GM12878 (cell line): ENCODE measurements at regions of chr6 and their contacts with region 1.

Region 1: DNA sequence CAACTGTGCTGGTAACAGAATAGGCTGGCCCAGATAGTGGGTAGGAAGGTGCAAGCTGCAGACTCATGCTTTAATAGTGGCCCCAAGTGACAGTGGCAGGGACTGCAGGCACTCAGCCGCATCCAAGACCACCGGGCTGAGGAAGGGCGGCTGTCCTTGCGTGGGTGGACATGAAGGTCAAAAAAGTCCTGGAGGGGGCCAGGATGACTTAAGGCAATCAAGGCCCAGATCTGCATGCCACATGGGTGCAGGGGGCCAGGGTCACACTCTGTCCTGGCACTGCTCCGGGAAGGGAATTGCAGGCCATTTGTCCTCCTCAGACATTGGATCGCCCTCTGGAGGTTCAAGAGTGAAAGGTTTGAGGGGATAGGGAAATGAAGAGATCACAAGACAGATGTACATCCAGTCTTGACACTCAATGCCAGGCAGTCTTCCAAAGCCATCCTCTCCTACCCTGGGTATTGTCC is 10.4 kb upstream of the VNN2 start:
- DNase-seq: no peak
- ATAC-seq: peak; percentile 94
- H3K4me3 ChIP-seq: no peak overlapping the region
- H3K27ac ChIP-seq: no peak overlapping the region
- H3K4me1 ChIP-seq: no peaks in the 10 kb centered on the region
- H3K27me3 ChIP-seq: no peaks in the 10 kb centered on the region
- CTCF ChIP-seq: peak; percentile 62 to 70 (median 66)
- EP300 ChIP-seq: no peak
- POLR2A ChIP-seq: no peak
- RAD21 ChIP-seq: peak; percentile 72

Region 2: DNA sequence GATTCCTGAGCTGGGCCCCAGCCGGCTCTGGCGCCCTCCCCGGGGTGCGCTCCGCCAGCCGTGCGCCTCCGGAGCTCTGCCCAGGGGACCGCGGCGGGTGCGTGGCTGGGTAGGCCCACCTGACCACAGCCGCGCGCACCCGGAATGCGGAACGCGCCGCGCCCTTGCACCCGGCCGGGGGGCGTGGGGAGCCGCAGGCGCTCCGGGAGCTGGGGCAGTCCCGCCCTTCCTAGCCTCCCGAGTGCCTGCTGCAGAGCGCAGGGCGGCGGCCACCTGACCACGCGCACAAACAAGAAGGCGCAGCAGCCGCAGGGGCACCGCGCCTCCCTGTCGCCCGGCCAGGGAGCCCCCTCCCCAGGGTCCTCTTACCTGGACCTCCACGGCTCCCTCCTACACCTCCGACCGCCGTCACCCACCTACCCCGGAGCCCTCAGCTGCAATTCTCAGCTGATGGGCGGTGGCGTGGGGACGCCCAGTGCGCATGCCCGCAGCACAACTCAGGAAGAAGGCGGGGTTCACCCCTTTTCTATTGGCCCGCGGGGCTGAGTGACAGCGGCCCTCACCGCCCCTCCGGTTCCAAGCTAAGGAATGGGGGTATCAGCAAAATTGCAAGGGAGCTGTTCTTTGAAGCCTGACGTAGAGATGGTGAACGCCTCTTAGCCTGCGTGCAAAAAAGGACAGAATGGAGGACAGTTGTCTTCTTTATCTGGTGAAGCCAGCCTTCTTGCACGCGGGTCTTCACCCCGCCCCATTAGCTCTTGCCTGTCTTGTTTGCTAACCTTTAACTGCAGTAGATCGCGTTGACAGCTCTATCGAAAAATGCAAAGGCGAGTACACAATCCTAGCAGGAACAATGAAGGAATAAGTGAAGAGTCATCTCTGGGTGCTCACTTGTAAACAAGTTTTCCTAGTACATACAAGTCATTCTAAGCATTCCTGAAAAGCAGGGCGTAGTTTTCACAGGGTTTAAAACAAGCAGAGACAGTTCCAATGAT is 255.1 kb before region 1 on chr6 and contains the start of gene STX7:
- CTCF ChIA-PET with region 1: no interaction called
- POLR2A ChIA-PET with region 1: no interaction called
- RAD21 ChIA-PET with region 1: interaction called, 4 read pairs
- SMC1A ChIA-PET with region 1: no interaction called
- in situ Hi-C with region 1: no loop called
- intact Hi-C with region 1: loop called (anchors 5 kb)
- DNase-seq: peak; percentile 48
- ATAC-seq: peak; percentile 91
- H3K4me3 ChIP-seq: peak within 1 kb of the TSS; percentile 61
- H3K27ac ChIP-seq: peak within 1 kb of the TSS; percentile 63
- H3K4me1 ChIP-seq: peaks cover 6% of the 10 kb centered on the region
- H3K27me3 ChIP-seq: no peaks in the 10 kb centered on the region
- CTCF ChIP-seq: no peak
- EP300 ChIP-seq: no peak
- POLR2A ChIP-seq: peak; percentile 77
- RAD21 ChIP-seq: no peak
- polyA plus RNA-seq, gene STX7: 26.5 to 30.7 TPM

Region 3: GRCh38 chr6:132530293-132530974 is 237.7 kb before region 1 on chr6:
- CTCF ChIA-PET with region 1: interaction called, 8 read pairs
- POLR2A ChIA-PET with region 1: no interaction called
- RAD21 ChIA-PET with region 1: interaction called, 3 read pairs
- SMC1A ChIA-PET with region 1: interaction called, 3 read pairs
- in situ Hi-C with region 1: no loop called
- intact Hi-C with region 1: loop called (anchors 1 kb)
- DNase-seq: peak; percentile 21
- ATAC-seq: peak; percentile 96
- H3K4me3 ChIP-seq: no peak overlapping the region
- H3K27ac ChIP-seq: no peak overlapping the region
- H3K4me1 ChIP-seq: no peaks in the 10 kb centered on the region
- H3K27me3 ChIP-seq: no peaks in the 10 kb centered on the region; a peak in 1 of 4 replicates
- CTCF ChIP-seq: peak; percentile 57 to 74 (median 60); a peak in 5 of 6 replicates
- EP300 ChIP-seq: no peak
- POLR2A ChIP-seq: no peak
- RAD21 ChIP-seq: peak; percentile 91

Region 4: GRCh38 chr6:132750455-132751248 is 17.4 kb before region 1 on chr6:
- CTCF ChIA-PET with region 1: interaction called, 7 read pairs
- POLR2A ChIA-PET with region 1: interaction called, 10 read pairs
- RAD21 ChIA-PET with region 1: interaction called, 25 read pairs
- SMC1A ChIA-PET with region 1: interaction called, 80 read pairs
- in situ Hi-C with region 1: no loop called
- intact Hi-C with region 1: no loop called
- DNase-seq: peak; percentile 69
- ATAC-seq: peak; percentile 91
- H3K4me3 ChIP-seq: peak overlapping the region; percentile 18; the same call in 1 of the 2 replicates
- H3K27ac ChIP-seq: peak overlapping the region; percentile 72
- H3K4me1 ChIP-seq: peaks cover 20% of the 10 kb centered on the region
- H3K27me3 ChIP-seq: no peaks in the 10 kb centered on the region
- CTCF ChIP-seq: no peak
- EP300 ChIP-seq: peak; percentile 44 to 47; a peak in 2 of 4 replicates
- POLR2A ChIP-seq: no peak
- RAD21 ChIP-seq: no peak

Region 5: GRCh38 chr6:132780770-132781371 is 12.8 kb after region 1 on chr6:
- CTCF ChIA-PET with region 1: interaction called, 12 read pairs
- POLR2A ChIA-PET with region 1: no interaction called
- RAD21 ChIA-PET with region 1: interaction called, 3 read pairs
- SMC1A ChIA-PET with region 1: interaction called, 5 read pairs
- in situ Hi-C with region 1: no loop called
- intact Hi-C with region 1: no loop called
- DNase-seq: no peak
- ATAC-seq: peak; percentile 84
- H3K4me3 ChIP-seq: no peak overlapping the region
- H3K27ac ChIP-seq: no peak overlapping the region
- H3K4me1 ChIP-seq: no peaks in the 10 kb centered on the region
- H3K27me3 ChIP-seq: no peaks in the 10 kb centered on the region
- CTCF ChIP-seq: peak; percentile 42 to 50 (median 43); a peak in 4 of 6 replicates
- EP300 ChIP-seq: no peak
- POLR2A ChIP-seq: no peak
- RAD21 ChIP-seq: peak; percentile 37; the same call in 1 of the 2 replicates

Region 6: DNA sequence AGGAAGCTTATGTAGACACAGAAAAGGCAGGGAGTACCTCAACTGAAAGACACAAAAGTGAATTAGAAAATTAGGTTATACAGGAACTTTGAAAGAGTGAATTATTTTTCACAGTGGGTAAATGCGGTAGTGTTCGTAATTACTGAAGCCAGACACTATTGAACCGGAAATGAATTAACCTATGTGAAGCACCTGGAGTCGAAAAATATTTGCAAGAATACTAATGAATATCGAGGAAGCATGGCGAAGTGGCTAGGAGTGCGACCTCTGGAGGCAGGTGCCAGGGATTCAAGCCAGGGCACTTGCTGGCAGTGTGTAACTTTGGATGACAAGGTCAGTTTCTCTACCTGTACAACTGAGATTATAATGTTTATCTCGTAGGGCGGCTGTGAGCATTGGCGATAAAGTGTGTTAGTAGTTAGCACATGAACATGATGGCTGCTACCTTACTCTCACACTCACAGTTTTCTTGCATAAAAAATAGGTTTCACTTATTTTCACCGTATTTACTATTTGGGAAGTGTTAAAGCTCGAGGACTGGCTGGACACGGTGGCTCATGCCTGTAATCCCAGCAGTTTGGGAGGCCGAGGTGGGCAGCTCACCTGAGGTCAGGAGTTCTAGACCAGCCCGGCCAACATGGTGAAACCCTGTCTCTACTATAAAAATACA is 30.9 kb after region 1 on chr6:
- CTCF ChIA-PET with region 1: interaction called, 18 read pairs
- POLR2A ChIA-PET with region 1: no interaction called
- RAD21 ChIA-PET with region 1: interaction called, 4 read pairs
- SMC1A ChIA-PET with region 1: interaction called, 6 read pairs
- in situ Hi-C with region 1: no loop called
- intact Hi-C with region 1: no loop called
- DNase-seq: peak; percentile 63
- ATAC-seq: peak; percentile 94
- H3K4me3 ChIP-seq: peak overlapping the region; percentile 82
- H3K27ac ChIP-seq: peak overlapping the region; percentile 87
- H3K4me1 ChIP-seq: peaks cover 3% of the 10 kb centered on the region; the same call in 1 of the 2 replicates
- H3K27me3 ChIP-seq: no peaks in the 10 kb centered on the region
- CTCF ChIP-seq: peak; percentile 78 to 90 (median 85)
- EP300 ChIP-seq: no peak
- POLR2A ChIP-seq: no peak
- RAD21 ChIP-seq: peak; percentile 55

Region 7: GRCh38 chr6:132820629-132821381 is 52.7 kb after region 1 on chr6:
- CTCF ChIA-PET with region 1: interaction called, 4 read pairs
- POLR2A ChIA-PET with region 1: no interaction called
- RAD21 ChIA-PET with region 1: no interaction called
- SMC1A ChIA-PET with region 1: interaction called, 10 read pairs
- in situ Hi-C with region 1: no loop called
- intact Hi-C with region 1: no loop called
- DNase-seq: no peak
- ATAC-seq: peak; percentile 26
- H3K4me3 ChIP-seq: no peak overlapping the region
- H3K27ac ChIP-seq: no peak overlapping the region
- H3K4me1 ChIP-seq: no peaks in the 10 kb centered on the region
- H3K27me3 ChIP-seq: no peaks in the 10 kb centered on the region
- CTCF ChIP-seq: no peak
- EP300 ChIP-seq: no peak
- POLR2A ChIP-seq: peak; percentile 65
- RAD21 ChIP-seq: no peak